ENCODE measurements at regions of chr6 and their contacts with region 1.

Region 1: GRCh38 chr6:33029328-33030184 is 20.2 kb upstream of the HLA-DOA start:
- DNase-seq: peak; percentile 16
- H3K4me3 Mint-ChIP-seq: peak overlapping the region; percentile 19
- H3K27ac Mint-ChIP-seq: peak overlapping the region; percentile 63
- H3K4me1 Mint-ChIP-seq: peaks cover 23% of the 10 kb centered on the region
- H3K27me3 Mint-ChIP-seq: peaks cover 28% of the 10 kb centered on the region

Region 2: GRCh38 chr6:32952817-32953739 is 76.5 kb before region 1 on chr6 and contains the start of gene HLA-DMA:
- intact Hi-C with region 1: no loop called
- DNase-seq: peak; percentile 79
- H3K4me3 Mint-ChIP-seq: peak within 1 kb of the TSS; percentile 81
- H3K27ac Mint-ChIP-seq: peak within 1 kb of the TSS; percentile 72
- H3K4me1 Mint-ChIP-seq: peaks cover 57% of the 10 kb centered on the region
- H3K27me3 Mint-ChIP-seq: no peaks in the 10 kb centered on the region
- total RNA-seq, gene HLA-DMA: 14.1 and 14.2 TPM in 2 replicates

Region 3: GRCh38 chr6:33075568-33076405 is 46.2 kb after region 1 on chr6 and contains the start of gene HLA-DPB1:
- intact Hi-C with region 1: loop called (anchors 2 kb)
- DNase-seq: peak; percentile 40
- H3K4me3 Mint-ChIP-seq: peak within 1 kb of the TSS; percentile 78
- H3K27ac Mint-ChIP-seq: peak within 1 kb of the TSS; percentile 47
- H3K4me1 Mint-ChIP-seq: peaks cover 60% of the 10 kb centered on the region
- H3K27me3 Mint-ChIP-seq: peaks cover 4% of the 10 kb centered on the region
- total RNA-seq, gene HLA-DPB1: 12.2 and 12.3 TPM in 2 replicates

Measured in activated T-helper 1 cell treated with anti-CD3 and anti-CD28 coated beads, Interleukin-12 subunit alpha, Interleukin-12 subunit beta, Interleukin-2, Interleukin-4 antibody, amounts not matched to agents 30 ng/mL and 10 ng/mL and 1 ng/mL, durations not matched to agents 14 hours and 24 hours and 36 hours (primary cell).